ENCODE measurements at regions of chr14 and their contacts with region 1.

Region 1: GRCh38 chr14:67359775-67360648 is at the starts of genes ATP6V1D and EIF2S1:
- DNase-seq: peak; percentile 100
- H3K4me3 Mint-ChIP-seq: peak within 1 kb of the TSS; percentile 98
- H3K27ac Mint-ChIP-seq: peak within 1 kb of the TSS; percentile 95
- H3K4me1 Mint-ChIP-seq: peaks cover 63% of the 10 kb centered on the region
- H3K27me3 Mint-ChIP-seq: no peaks in the 10 kb centered on the region
- total RNA-seq, gene ATP6V1D: 16.5 to 19.9 TPM
- total RNA-seq, gene EIF2S1: 186 to 196 TPM

Region 2: GRCh38 chr14:67158566-67158965 is 201.4 kb before region 1 on chr14:
- CTCF ChIA-PET with region 1: no interaction called
- intact Hi-C with region 1: loop called (anchors 2 kb)
- DNase-seq: no peak
- H3K4me3 Mint-ChIP-seq: no peak overlapping the region
- H3K27ac Mint-ChIP-seq: no peak overlapping the region
- H3K4me1 Mint-ChIP-seq: peaks cover 16% of the 10 kb centered on the region
- H3K27me3 Mint-ChIP-seq: no peaks in the 10 kb centered on the region

Region 3: DNA sequence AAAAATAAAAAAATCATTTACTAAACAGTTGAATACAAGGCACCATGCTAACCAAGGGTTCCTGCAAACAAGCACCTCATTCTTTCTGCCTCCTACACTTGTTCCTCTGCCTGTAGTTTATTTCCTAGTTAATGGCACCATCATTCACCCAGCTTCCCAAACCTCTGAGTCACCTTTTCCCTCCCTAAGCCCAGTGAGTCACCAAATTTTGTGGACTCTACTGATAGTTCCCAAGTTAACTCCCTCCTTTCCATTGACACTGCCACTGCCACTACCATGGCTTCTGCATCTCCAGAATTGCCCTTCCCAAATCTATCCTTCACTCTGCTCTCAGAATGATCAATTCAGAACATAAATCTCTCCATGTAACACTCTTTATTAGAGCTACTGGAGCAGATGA is 172.8 kb before region 1 on chr14:
- CTCF ChIA-PET with region 1: interaction called, 5 read pairs
- intact Hi-C with region 1: loop called (anchors 1 kb)
- DNase-seq: no peak
- H3K4me3 Mint-ChIP-seq: no peak overlapping the region
- H3K27ac Mint-ChIP-seq: no peak overlapping the region
- H3K4me1 Mint-ChIP-seq: peaks cover 17% of the 10 kb centered on the region
- H3K27me3 Mint-ChIP-seq: peaks cover 3% of the 10 kb centered on the region

Region 4: GRCh38 chr14:67373347-67373746 is 13.3 kb after region 1 on chr14:
- CTCF ChIA-PET with region 1: interaction called, 11 read pairs
- intact Hi-C with region 1: no loop called
- DNase-seq: peak; percentile 40
- H3K4me3 Mint-ChIP-seq: no peak overlapping the region
- H3K27ac Mint-ChIP-seq: peak overlapping the region; percentile 82
- H3K4me1 Mint-ChIP-seq: peaks cover 40% of the 10 kb centered on the region
- H3K27me3 Mint-ChIP-seq: no peaks in the 10 kb centered on the region

Region 5: GRCh38 chr14:67420102-67420830 is 60.3 kb after region 1 on chr14:
- CTCF ChIA-PET with region 1: no interaction called
- intact Hi-C with region 1: no loop called
- DNase-seq: peak; percentile 57
- H3K4me3 Mint-ChIP-seq: no peak overlapping the region
- H3K27ac Mint-ChIP-seq: no peak overlapping the region
- H3K4me1 Mint-ChIP-seq: no peaks in the 10 kb centered on the region
- H3K27me3 Mint-ChIP-seq: peaks cover 5% of the 10 kb centered on the region

Region 6: DNA sequence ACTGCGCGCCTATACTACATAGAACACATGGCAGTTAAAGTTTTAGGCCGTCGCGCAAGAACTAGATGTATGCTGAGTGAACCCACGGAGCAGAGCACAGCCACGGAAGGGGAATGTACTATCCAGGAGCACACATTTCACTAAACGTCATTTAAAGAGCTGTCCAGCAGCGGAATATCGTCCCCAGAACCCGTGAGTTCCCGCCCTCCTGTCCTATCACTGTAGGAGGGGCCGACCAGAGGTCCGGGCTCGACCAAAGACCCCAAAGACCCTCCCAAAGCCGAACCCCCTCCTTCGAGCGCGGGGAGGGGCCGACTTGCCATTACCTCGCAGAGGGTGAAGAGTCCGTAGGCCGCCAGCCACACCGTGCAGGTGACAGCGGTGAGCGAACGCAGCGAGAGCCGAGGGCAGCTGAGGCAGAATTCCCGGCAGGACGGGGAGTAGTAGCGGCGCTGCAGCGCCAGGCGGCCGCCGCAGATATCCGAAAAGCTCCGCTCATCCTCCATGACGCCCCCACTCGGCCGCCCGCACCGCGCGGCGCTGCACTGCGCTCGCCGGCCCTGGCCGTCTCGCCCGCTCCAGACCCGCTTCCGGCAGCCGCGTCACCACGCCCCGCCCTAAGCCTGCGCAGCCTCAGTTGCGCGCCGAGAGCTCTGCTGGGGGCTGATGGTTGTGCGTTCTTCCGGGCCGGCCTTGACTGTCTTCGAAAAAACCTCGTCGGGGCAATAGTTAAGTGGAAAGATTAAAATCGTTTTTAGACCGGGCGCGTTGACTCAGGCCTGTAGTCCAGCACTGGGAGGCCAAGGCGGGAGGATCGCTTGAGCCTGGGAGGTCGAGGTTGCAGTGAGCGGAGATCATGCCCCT is 239.9 kb after region 1 on chr14 and contains the start of gene PIGH:
- CTCF ChIA-PET with region 1: no interaction called
- intact Hi-C with region 1: loop called (anchors 1 kb)
- DNase-seq: peak; percentile 95
- H3K4me3 Mint-ChIP-seq: peak within 1 kb of the TSS; percentile 84
- H3K27ac Mint-ChIP-seq: peak within 1 kb of the TSS; percentile 93
- H3K4me1 Mint-ChIP-seq: peaks cover 38% of the 10 kb centered on the region
- H3K27me3 Mint-ChIP-seq: no peaks in the 10 kb centered on the region
- total RNA-seq, gene PIGH: 11.9 to 12.4 TPM

Region 7: GRCh38 chr14:67695394-67695949 is 335.5 kb after region 1 on chr14 and contains the start of gene RDH11:
- CTCF ChIA-PET with region 1: no interaction called
- intact Hi-C with region 1: loop called (anchors 1 kb)
- DNase-seq: peak; percentile 91
- H3K4me3 Mint-ChIP-seq: peak within 1 kb of the TSS; percentile 81
- H3K27ac Mint-ChIP-seq: peak within 1 kb of the TSS; percentile 91
- H3K4me1 Mint-ChIP-seq: peaks cover 22% of the 10 kb centered on the region
- H3K27me3 Mint-ChIP-seq: no peaks in the 10 kb centered on the region
- total RNA-seq, gene RDH11: 58.5 to 64.3 TPM

Measured in activated naive CD4-positive, alpha-beta T cell treated with anti-CD3 and anti-CD28 coated beads for 36 hours (primary cell).